ENCODE measurements at regions of chr6 and their contacts with region 1.

Region 1: DNA sequence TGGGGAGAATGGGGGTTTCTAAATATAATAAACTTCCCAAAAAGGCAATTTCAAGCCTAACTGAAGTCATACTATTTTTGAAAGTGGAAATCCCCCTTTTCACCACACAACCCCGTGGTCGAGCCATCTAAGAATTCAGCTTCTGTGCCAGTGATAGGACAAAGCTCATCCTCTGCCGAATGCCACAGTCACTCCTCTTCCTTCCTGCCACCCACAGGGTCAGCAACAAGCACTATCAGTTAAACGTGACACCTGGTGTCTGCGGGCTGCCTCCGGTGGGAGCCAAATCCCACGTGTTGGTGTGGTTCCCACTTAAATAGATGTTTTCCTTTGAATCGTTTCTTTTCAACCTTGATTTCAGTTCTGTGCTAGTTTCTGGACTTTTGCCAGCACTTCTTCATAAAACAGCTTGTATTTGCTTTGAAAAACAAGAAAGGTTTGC is 60.7 kb downstream of the TNFAIP3 start:
- DNase-seq: peak; percentile 90
- H3K4me3 Mint-ChIP-seq: peak overlapping the region; percentile 66
- H3K27ac Mint-ChIP-seq: peak overlapping the region; percentile 95
- H3K4me1 Mint-ChIP-seq: peaks cover 63% of the 10 kb centered on the region
- H3K27me3 Mint-ChIP-seq: no peaks in the 10 kb centered on the region

Region 2: GRCh38 chr6:137423444-137424168 is 504.2 kb before region 1 on chr6:
- CTCF ChIA-PET with region 1: no interaction called
- intact Hi-C with region 1: no loop called
- DNase-seq: no peak
- H3K4me3 Mint-ChIP-seq: no peak overlapping the region
- H3K27ac Mint-ChIP-seq: no peak overlapping the region
- H3K4me1 Mint-ChIP-seq: peaks cover 18% of the 10 kb centered on the region
- H3K27me3 Mint-ChIP-seq: no peaks in the 10 kb centered on the region

Region 3: DNA sequence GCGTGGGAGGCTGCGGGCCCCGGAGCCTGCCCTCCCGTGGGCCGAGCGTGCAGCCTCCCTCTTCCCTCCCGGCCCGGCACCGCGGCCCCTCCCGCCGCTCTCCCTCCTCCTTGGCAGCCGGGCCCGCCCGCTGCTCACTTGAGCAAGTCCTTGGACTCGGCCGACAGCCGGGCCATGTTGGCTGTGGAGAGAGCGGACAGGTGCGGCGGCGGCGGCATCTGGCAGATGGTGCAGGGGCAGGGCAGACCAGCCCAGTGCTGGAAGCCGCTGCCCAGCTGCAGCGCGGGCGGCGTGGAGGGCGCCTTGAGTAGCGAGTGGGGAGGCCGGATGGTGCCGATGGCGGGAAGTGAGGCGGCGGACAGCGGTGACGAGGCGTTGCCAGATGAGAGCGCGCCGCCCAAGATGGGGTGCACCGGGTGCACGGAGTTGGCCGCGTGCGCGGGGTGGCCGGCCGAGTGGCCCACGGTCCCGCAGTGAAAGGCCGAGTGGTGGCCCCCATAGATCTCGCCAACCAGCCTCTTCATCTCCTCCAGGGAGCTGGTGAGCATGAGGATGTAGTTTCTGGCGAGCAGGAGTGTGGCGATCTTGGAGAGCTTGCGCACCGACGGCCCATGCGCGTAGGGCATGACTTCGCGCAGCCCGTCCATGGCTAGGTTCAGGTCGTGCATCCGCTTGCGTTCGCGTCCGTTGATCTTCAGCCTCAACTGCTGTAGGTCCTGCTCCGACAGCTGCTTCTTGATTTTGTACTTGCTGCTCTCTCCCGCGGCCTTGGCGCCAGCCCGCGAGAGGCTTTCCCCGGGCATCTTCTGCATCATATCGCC is 434.4 kb before region 1 on chr6:
- CTCF ChIA-PET with region 1: no interaction called
- intact Hi-C with region 1: no loop called
- DNase-seq: peak; percentile 30
- H3K4me3 Mint-ChIP-seq: peak overlapping the region; percentile 58
- H3K27ac Mint-ChIP-seq: no peak overlapping the region
- H3K4me1 Mint-ChIP-seq: peaks cover 77% of the 10 kb centered on the region
- H3K27me3 Mint-ChIP-seq: peaks cover 92% of the 10 kb centered on the region

Region 4: DNA sequence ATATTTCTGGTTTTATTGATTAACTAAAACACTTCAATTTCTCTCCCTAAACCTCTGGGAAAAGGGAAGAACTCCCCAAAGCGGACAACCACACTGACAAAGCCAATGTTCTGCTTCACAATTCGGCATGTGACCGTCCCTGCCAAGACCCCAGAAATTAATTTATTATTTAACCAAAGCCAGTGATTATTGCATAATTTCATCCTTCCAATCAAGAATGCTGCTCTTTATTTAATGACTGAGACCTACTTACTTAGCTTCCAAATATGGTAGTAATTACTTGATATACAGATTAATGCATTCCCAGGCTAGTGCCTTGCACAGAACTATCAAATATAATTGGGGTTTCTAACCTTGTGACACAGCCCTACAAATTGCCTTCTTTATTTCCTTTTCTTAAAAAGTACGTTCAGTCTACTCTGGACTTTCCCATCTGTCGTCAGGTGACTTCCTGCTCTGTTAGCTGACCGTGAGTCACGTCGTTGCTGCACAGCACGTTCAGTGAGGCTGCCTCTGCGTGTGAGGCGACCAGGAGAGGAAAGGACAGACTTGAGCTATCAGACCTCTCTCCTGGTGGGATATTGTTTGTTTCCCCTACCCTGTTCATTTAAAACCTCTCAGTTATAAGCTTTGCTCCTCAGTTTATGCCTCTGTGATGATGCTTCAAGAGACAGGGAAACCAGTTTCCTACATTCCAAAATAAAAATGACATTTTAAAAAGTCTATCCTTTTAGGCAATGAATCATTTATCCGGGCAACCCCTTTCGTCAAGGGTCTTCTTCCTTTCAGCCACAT is 116.5 kb before region 1 on chr6:
- CTCF ChIA-PET with region 1: no interaction called
- intact Hi-C with region 1: loop called (anchors 5 kb)
- DNase-seq: peak; percentile 93
- H3K4me3 Mint-ChIP-seq: peak overlapping the region; percentile 52
- H3K27ac Mint-ChIP-seq: peak overlapping the region; percentile 94
- H3K4me1 Mint-ChIP-seq: peaks cover 75% of the 10 kb centered on the region
- H3K27me3 Mint-ChIP-seq: no peaks in the 10 kb centered on the region

Region 5: GRCh38 chr6:137832110-137832509 is 95.7 kb before region 1 on chr6:
- CTCF ChIA-PET with region 1: no interaction called
- intact Hi-C with region 1: no loop called
- DNase-seq: no peak
- H3K4me3 Mint-ChIP-seq: no peak overlapping the region
- H3K27ac Mint-ChIP-seq: no peak overlapping the region
- H3K4me1 Mint-ChIP-seq: peaks cover 48% of the 10 kb centered on the region
- H3K27me3 Mint-ChIP-seq: no peaks in the 10 kb centered on the region

Region 6: GRCh38 chr6:137873273-137873762 is 54.5 kb before region 1 on chr6:
- CTCF ChIA-PET with region 1: interaction called, 22 read pairs
- intact Hi-C with region 1: loop called (anchors 1 kb)
- DNase-seq: peak; percentile 97
- H3K4me3 Mint-ChIP-seq: peak overlapping the region; percentile 89
- H3K27ac Mint-ChIP-seq: peak overlapping the region; percentile 99
- H3K4me1 Mint-ChIP-seq: peaks cover 37% of the 10 kb centered on the region
- H3K27me3 Mint-ChIP-seq: no peaks in the 10 kb centered on the region

Region 7: DNA sequence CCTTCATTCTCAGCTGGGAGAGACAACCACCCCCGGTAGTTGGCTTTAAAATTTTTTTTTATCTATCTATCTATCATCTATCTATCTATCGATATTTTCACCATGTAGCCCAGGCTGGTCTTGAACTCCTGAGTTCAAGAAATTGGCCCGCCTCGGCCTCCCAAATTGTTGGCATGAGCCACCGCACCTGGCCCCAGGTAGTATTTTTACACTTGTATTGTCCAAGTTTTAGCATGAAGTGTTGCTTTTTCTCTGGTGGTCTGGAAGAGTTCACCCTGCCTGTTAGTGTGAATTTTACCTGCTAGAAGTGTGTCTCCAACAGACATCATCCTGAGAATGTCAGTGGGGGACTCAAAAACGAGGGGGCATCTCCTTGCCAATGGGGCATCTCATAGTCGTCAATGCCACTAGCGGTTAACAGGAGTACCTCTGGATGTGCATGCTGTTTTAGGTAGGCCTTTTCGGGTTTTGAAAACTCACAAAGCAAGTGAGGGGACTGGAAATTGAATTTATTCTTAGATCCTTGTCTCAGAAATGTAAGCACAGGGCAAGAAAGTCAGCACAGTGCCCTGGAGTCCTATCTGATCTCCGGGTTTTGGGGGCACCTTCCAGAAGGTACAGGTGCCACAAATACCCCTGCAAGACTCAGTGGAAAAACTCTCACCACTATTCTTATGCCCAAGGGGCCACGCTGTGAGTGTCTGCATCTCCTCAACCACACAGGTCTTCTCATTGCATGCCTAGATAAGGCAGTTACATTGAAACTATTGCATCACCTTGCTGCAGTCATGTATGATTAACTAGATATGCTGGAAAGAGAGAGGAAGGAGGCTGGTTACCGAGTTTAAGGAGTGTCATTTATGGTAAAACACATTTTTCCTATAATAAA is 23.6 kb before region 1 on chr6:
- CTCF ChIA-PET with region 1: interaction called, 4 read pairs
- intact Hi-C with region 1: loop called (anchors 1 kb)
- DNase-seq: peak; percentile 77
- H3K4me3 Mint-ChIP-seq: peak overlapping the region; percentile 71
- H3K27ac Mint-ChIP-seq: peak overlapping the region; percentile 100
- H3K4me1 Mint-ChIP-seq: peaks cover 71% of the 10 kb centered on the region
- H3K27me3 Mint-ChIP-seq: no peaks in the 10 kb centered on the region

Region 8: DNA sequence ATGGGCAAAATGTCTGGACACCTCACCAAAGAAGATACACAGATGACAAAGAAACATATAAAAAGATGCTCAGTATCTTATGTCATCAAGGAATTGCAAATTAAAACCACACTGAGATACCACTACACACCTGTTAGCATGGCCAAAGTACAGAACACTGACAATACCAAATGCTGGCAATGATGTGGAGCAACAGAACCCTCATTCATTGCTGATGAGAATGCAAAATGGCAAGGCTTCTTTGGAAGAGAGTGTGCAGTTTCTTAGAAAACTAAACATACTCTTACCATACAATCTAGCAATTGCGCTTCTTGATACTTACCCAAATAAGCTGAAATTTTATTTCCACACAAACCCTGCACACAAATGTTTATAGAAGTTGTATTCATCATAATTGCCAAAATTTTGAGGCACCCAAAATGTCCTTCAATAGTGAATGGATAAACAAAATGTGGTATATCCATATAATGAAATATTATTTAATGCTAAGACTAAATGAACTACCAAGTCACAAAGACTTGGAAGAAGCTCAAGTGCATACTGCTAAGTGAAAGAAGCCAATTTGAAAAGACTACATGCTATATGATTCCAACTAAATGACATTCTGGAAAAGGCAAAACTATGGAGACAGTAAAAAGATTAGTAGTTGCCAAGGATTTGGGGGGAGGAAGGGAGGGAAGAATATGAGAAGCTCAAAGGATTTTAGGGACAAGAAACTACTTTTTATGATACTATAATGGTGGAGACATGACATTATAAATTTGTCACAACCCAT is 10.1 kb before region 1 on chr6:
- CTCF ChIA-PET with region 1: interaction called, 7 read pairs
- intact Hi-C with region 1: loop called (anchors 1 kb)
- DNase-seq: no peak
- H3K4me3 Mint-ChIP-seq: no peak overlapping the region
- H3K27ac Mint-ChIP-seq: no peak overlapping the region
- H3K4me1 Mint-ChIP-seq: peaks cover 14% of the 10 kb centered on the region
- H3K27me3 Mint-ChIP-seq: no peaks in the 10 kb centered on the region